K562 (cell line): ENCODE measurements at regions of chr10 and their contacts with region 1.

Region 1: DNA sequence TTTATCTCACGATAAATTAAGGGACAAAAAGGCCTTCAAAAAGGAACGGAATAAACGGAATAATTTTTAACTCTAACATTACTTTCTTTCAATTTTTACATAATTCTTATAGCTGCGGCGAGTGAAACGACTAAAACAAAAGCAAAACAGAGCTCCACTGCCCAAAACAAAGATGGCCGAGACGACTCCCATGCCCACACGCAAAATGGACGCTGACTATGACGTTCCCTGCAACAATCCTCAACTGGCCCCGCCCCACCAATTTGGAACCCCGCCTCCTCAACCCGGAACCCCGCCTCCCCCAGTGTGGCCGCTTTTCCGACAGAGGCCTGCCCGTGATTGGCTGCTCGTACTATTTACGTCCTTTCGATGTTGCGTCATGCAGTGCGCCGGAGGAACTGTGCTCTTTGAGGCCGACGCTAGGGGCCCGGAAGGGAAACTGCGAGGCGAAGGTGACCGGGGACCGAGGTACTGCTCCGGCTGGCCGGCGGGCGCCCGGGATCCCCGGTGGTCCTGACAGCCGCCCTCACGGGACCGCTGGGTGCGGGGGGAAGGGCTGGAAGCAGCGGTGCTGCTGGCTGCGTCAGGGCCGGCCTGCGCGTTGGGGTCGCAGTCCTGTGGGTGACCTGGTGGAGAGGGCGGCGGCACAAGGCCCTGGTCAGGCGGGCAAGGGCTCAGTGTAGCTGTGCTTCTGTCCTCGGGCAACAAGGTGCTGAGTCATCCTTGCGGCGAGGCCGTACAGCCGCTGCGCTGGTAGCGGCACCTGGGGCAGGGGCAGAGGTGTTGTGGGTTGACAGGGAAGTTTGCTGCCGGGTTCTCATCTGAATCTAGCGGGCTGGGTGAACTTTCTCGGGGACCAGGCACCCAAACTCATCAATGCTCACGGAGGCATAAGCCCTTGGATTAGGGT is at the start of gene GHITM:
- DNase-seq: peak; percentile 96 to 99 (median 97)
- ATAC-seq: peak; percentile 94
- H3K4me3 ChIP-seq: peak within 1 kb of the TSS; percentile 100
- H3K27ac ChIP-seq: peak within 1 kb of the TSS; percentile 99
- H3K4me1 ChIP-seq: peaks cover 0 to 12% of the 10 kb centered on the region in 2 experiments; a peak in 4 of 5 replicates
- H3K27me3 ChIP-seq: no peaks in the 10 kb centered on the region
- CTCF ChIP-seq: peak; percentile 33 to 44 (median 38); a peak in 5 of 6 replicates
- EP300 ChIP-seq: peak; percentile 40; the same call in 1 of the 2 replicates
- POLR2A ChIP-seq: peak; percentile 97
- RAD21 ChIP-seq: no peak
- polyA plus RNA-seq, gene GHITM: 1,201 to 1,258 TPM

Region 2: GRCh38 chr10:84156768-84157167 is 17.4 kb after region 1 on chr10:
- CTCF ChIA-PET with region 1: no interaction called
- POLR2A ChIA-PET with region 1: interaction called, 14 read pairs
- in situ Hi-C with region 1: no loop called
- intact Hi-C with region 1: no loop called
- DNase-seq: peak in 2 of 4 experiments; percentile 21 to 60
- ATAC-seq: peak; percentile 90
- H3K4me3 ChIP-seq: no peak overlapping the region
- H3K27ac ChIP-seq: no peak overlapping the region
- H3K4me1 ChIP-seq: no peaks in the 10 kb centered on the region
- H3K27me3 ChIP-seq: peaks cover 5 to 9% of the 10 kb centered on the region in 2 experiments
- CTCF ChIP-seq: no peak
- EP300 ChIP-seq: no peak
- POLR2A ChIP-seq: peak; percentile 58
- RAD21 ChIP-seq: no peak

Region 3: GRCh38 chr10:84256510-84257342 is 117.3 kb after region 1 on chr10:
- CTCF ChIA-PET with region 1: no interaction called
- POLR2A ChIA-PET with region 1: no interaction called
- in situ Hi-C with region 1: no loop called
- intact Hi-C with region 1: loop called (anchors 5 kb)
- DNase-seq: peak; percentile 79 to 87 (median 85)
- ATAC-seq: peak; percentile 95
- H3K4me3 ChIP-seq: no peak overlapping the region
- H3K27ac ChIP-seq: no peak overlapping the region
- H3K4me1 ChIP-seq: peaks cover 4 to 15% of the 10 kb centered on the region in 2 experiments; a peak in 2 of 5 replicates
- H3K27me3 ChIP-seq: peaks cover 5 to 32% of the 10 kb centered on the region in 2 experiments; a peak in 2 of 5 replicates
- CTCF ChIP-seq: peak; percentile 87 to 92 (median 91)
- EP300 ChIP-seq: no peak
- POLR2A ChIP-seq: no peak
- RAD21 ChIP-seq: peak; percentile 44 to 74